HepG2 (cell line): ENCODE measurements at regions of chr2 and their contacts with region 1.

Region 1: GRCh38 chr2:101036562-101037457 is 34.7 kb downstream of the RPL31 start:
- DNase-seq: peak; percentile 33
- ATAC-seq: no peak
- H3K4me3 ChIP-seq: no peak overlapping the region
- H3K27ac ChIP-seq: no peak overlapping the region
- H3K4me1 ChIP-seq: no peaks in the 10 kb centered on the region
- H3K27me3 ChIP-seq: no peaks in the 10 kb centered on the region
- CTCF ChIP-seq: peak; percentile 56
- EP300 ChIP-seq: no peak
- POLR2A ChIP-seq: no peak
- RAD21 ChIP-seq: peak; percentile 69

Region 2: GRCh38 chr2:101113396-101114267 is 76.8 kb after region 1 on chr2:
- CTCF ChIA-PET with region 1: interaction called, 3 read pairs
- POLR2A ChIA-PET with region 1: no interaction called
- in situ Hi-C with region 1: no loop called
- intact Hi-C with region 1: loop called (anchors 1 kb)
- DNase-seq: peak; percentile 88
- ATAC-seq: no peak
- H3K4me3 ChIP-seq: peak overlapping the region in 1 of 3 experiments; percentile 13; a peak in 1 of 6 replicates
- H3K27ac ChIP-seq: peak overlapping the region; percentile 100
- H3K4me1 ChIP-seq: peaks cover 96% of the 10 kb centered on the region
- H3K27me3 ChIP-seq: no peaks in the 10 kb centered on the region
- CTCF ChIP-seq: no peak
- EP300 ChIP-seq: peak in 1 of 2 experiments; percentile 88; a peak in 2 of 4 replicates
- POLR2A ChIP-seq: no peak
- RAD21 ChIP-seq: no peak

Region 3: GRCh38 chr2:101173707-101174295 is 137.0 kb after region 1 on chr2:
- CTCF ChIA-PET with region 1: no interaction called
- POLR2A ChIA-PET with region 1: no interaction called
- in situ Hi-C with region 1: no loop called
- intact Hi-C with region 1: no loop called
- DNase-seq: no peak
- ATAC-seq: peak; percentile 31; the same call in 1 of the 3 replicates
- H3K4me3 ChIP-seq: no peak overlapping the region
- H3K27ac ChIP-seq: no peak overlapping the region
- H3K4me1 ChIP-seq: peaks cover 46% of the 10 kb centered on the region
- H3K27me3 ChIP-seq: no peaks in the 10 kb centered on the region
- CTCF ChIP-seq: no peak
- EP300 ChIP-seq: no peak
- POLR2A ChIP-seq: no peak
- RAD21 ChIP-seq: no peak